Activated CD4-positive, alpha-beta T cell treated with anti-CD3 and anti-CD28 coated beads, Interleukin-2, amount 10 ng/mL, durations not matched to agents 24 days and 14 days (primary cell): ENCODE measurements at regions of chr19 and their contacts with region 1.

Region 1: DNA sequence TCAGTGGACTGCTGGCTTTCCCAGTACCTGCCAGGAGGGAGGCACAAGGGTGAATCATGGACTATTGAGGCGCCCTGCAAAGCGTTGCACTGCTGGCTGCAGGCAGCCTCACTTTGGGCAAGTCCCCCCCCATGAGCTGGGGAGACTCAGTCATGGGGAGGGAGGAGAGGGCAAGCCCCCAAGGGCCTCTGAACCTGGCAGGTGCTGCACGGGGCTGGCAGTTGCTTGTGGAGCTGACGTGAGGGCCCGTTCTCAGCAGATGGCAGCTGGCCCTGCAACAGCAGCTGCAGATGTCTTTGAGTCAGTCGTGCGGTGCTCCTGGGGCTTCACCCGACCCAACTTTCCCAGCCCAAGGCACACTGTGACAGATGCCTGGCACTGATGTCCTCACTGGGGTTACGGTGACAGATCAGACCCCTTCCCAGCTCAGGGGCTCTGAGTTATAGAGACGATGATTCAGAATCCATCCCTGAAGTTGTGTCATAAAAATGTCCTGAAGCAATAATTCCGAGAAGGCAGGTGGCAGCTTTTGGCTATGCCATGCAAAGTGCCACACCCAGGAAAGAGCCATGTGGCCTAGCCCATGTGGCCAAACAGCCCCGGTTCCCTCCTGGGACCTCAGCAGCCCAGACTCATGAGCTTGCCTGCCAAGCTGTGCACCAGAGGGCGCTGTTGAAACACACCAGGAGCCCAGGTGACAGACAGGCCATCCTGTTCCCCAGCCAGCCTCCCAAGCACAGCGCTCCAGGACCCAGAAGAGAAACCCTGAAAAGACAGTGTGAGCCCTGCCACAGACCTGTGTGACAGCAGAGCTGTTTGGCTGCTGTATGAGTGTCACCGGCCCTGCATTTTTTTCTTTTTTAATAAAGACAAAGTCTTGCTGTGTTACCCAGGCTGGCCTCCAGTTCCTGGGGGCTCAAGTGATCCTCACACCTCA is 53.6 kb upstream of the LDLR start:
- DNase-seq: peak; percentile 95
- H3K4me3 Mint-ChIP-seq: no peak overlapping the region
- H3K27ac Mint-ChIP-seq: peak overlapping the region; percentile 45
- H3K4me1 Mint-ChIP-seq: peaks cover 6% of the 10 kb centered on the region
- H3K27me3 Mint-ChIP-seq: no peaks in the 10 kb centered on the region

Region 2: DNA sequence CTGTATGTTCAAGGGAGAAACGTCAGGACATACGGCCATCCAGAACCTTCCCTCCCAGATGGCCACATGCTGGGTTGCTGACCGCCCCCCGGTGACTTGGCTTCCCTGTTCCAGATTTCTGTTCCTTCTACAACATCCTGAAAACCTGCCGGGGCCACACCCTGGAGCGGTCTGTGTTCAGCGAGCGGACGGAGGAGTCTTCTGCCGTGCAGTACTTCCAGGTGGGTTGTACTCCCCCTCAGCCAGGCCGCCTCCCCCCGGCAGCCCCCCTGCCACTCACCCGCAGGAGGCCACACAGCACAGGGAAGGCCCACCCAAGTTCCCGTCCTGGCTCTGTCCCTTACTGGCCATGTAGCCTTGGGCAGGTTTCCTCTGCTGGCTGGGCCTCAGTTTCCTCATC is 127.8 kb before region 1 on chr19:
- intact Hi-C with region 1: no loop called
- DNase-seq: no peak
- H3K4me3 Mint-ChIP-seq: no peak overlapping the region
- H3K27ac Mint-ChIP-seq: no peak overlapping the region
- H3K4me1 Mint-ChIP-seq: peaks cover 2% of the 10 kb centered on the region
- H3K27me3 Mint-ChIP-seq: no peaks in the 10 kb centered on the region

Region 3: DNA sequence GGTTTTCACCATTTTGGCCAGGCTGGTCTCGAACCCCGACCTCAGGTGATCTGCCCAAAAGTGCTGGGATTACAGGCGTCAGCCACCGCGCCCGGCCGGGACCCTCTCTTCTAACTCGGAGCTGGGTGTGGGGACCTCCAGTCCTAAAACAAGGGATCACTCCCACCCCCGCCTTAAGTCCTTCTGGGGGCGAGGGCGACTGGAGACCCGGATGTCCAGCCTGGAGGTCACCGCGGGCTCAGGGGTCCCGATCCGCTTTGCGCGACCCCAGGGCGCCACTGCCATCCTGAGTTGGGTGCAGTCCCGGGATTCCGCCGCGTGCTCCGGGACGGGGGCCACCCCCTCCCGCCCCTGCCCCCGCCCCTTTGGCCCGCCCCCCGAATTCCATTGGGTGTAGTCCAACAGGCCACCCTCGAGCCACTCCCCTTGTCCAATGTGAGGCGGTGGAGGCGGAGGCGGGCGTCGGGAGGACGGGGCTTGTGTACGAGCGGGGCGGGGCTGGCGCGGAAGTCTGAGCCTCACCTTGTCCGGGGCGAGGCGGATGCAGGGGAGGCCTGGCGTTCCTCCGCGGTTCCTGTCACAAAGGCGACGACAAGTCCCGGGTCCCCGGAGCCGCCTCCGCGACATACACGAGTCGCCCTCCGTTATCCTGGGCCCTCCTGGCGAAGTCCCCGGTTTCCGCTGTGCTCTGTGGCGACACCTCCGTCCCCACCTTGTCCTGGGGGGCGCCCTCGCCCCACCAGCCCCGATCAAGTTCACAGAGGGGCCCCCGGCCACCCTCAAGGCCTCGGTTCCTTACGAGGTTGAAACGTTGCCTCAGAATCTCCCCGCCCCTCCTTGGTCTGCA is 54.6 kb after region 1 on chr19:
- intact Hi-C with region 1: loop called (anchors 5 kb)
- DNase-seq: peak; percentile 99
- H3K4me3 Mint-ChIP-seq: peak overlapping the region; percentile 97
- H3K27ac Mint-ChIP-seq: peak overlapping the region; percentile 100
- H3K4me1 Mint-ChIP-seq: peaks cover 36% of the 10 kb centered on the region
- H3K27me3 Mint-ChIP-seq: no peaks in the 10 kb centered on the region

Region 4: GRCh38 chr19:11130824-11131455 is 95.2 kb after region 1 on chr19:
- intact Hi-C with region 1: loop called (anchors 2 kb)
- DNase-seq: peak; percentile 91
- H3K4me3 Mint-ChIP-seq: no peak overlapping the region
- H3K27ac Mint-ChIP-seq: no peak overlapping the region
- H3K4me1 Mint-ChIP-seq: no peaks in the 10 kb centered on the region
- H3K27me3 Mint-ChIP-seq: no peaks in the 10 kb centered on the region

Region 5: GRCh38 chr19:11155373-11156120 is 119.8 kb after region 1 on chr19 and contains the start of gene SPC24:
- intact Hi-C with region 1: no loop called
- DNase-seq: peak; percentile 98
- H3K4me3 Mint-ChIP-seq: peak within 1 kb of the TSS; percentile 84
- H3K27ac Mint-ChIP-seq: peak within 1 kb of the TSS; percentile 81
- H3K4me1 Mint-ChIP-seq: peaks cover 27% of the 10 kb centered on the region
- H3K27me3 Mint-ChIP-seq: no peaks in the 10 kb centered on the region
- total RNA-seq, gene SPC24: 33.1 and 33.8 TPM in 2 replicates

Region 6: GRCh38 chr19:11203194-11204075 is 167.7 kb after region 1 on chr19:
- intact Hi-C with region 1: loop called (anchors 5 kb)
- DNase-seq: peak; percentile 79
- H3K4me3 Mint-ChIP-seq: no peak overlapping the region
- H3K27ac Mint-ChIP-seq: no peak overlapping the region
- H3K4me1 Mint-ChIP-seq: peaks cover 2% of the 10 kb centered on the region
- H3K27me3 Mint-ChIP-seq: peaks cover 16% of the 10 kb centered on the region